Activated naive CD4-positive, alpha-beta T cell treated with anti-CD3 and anti-CD28 coated beads for 36 hours (primary cell): ENCODE measurements at regions of chr17 and their contacts with region 1.

Region 1: GRCh38 chr17:79997011-79997660 is 38.5 kb downstream of the TBC1D16 start:
- DNase-seq: peak; percentile 92
- H3K4me3 Mint-ChIP-seq: peak overlapping the region; percentile 68
- H3K27ac Mint-ChIP-seq: peak overlapping the region; percentile 97
- H3K4me1 Mint-ChIP-seq: peaks cover 59% of the 10 kb centered on the region
- H3K27me3 Mint-ChIP-seq: no peaks in the 10 kb centered on the region

Region 2: DNA sequence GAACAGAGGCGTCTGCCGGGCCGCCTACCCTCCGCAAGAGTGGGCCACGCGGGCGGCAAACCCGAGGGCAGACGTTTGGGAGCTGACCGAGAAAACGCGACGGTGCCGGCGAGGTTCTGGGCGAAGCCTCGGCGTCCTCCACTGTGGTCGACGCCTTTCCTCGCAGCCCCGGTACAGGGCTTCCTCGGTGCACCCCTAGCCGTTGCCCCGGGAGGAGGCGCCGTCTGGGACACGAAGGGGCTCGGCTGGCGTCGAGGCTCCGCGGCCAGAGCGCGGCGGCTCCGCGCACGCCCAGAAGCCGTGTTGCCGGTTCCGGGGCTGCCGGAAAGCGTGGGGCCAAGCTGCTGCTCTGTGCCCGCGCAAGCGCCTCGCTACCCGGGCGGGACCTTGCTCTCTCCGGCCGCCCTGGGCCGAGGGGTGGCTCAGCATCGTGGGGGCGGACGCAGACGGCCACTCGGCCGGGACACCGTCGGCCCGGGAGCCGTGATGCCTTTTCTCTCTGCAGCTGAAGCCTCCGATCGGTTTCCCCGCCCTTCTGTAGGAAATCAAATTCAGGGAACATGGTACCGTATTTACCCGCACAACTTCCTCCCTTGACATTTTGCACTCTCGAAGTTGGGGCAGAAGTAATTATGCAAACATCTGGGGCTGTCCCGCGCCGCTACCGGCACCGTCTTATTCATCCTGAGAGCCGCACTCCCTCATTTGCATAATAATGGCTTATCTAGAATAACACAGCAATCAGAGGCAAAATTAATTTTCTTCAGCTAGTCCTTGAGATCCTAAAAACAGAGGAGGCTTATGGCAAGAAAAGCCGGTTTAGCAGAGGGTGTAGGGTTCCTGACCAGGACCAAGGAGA is 192.9 kb before region 1 on chr17:
- CTCF ChIA-PET with region 1: no interaction called
- intact Hi-C with region 1: loop called (anchors 1 kb)
- DNase-seq: peak; percentile 94
- H3K4me3 Mint-ChIP-seq: peak overlapping the region; percentile 67
- H3K27ac Mint-ChIP-seq: peak overlapping the region; percentile 74
- H3K4me1 Mint-ChIP-seq: peaks cover 44% of the 10 kb centered on the region
- H3K27me3 Mint-ChIP-seq: peaks cover 85% of the 10 kb centered on the region

Region 3: DNA sequence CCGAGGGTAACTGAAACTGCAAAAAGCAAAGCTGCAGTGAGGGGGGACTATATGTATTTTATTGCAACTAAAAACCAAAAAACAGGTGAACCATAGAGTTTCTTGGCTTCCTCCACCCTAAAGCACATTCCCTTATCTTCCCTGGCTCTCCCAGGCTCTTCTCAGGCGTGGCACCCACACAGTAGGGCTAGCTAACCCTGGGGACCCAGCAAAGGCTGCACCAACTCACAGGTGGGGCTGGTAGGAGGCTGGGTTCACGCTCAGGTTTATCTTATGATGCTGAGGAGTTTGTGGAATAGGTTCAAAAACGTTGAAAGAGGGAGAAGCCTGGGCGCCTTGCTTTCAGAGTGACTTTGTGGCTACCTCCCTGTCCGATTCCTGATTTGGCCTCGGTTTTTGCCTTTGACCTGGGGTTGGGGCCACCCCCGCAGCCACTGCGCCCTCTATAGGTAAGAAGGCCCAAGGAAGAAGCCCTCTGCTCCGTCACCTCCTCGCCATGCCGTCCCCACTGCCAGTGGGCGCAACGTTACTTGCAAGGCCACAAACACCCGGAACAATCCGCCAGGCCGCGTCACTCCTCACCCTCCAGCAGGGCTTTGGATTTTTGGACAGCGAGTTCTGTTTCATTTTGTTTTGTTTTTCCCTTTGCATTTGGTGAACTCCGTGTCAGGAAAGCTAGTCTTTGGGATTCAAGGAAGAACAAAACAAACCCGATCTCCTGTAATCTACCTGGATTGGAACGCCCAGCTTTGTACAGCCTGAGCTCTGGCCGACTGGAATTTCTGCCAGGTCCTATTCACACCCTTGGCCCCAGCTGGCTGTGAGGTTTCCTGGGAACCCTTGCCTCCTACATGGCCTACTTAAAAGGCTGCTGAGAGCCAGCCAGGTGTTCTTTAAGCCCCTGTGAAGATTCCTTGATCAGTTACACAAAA is 22.3 kb before region 1 on chr17:
- CTCF ChIA-PET with region 1: no interaction called
- intact Hi-C with region 1: no loop called
- DNase-seq: no peak
- H3K4me3 Mint-ChIP-seq: no peak overlapping the region
- H3K27ac Mint-ChIP-seq: no peak overlapping the region
- H3K4me1 Mint-ChIP-seq: no peaks in the 10 kb centered on the region
- H3K27me3 Mint-ChIP-seq: no peaks in the 10 kb centered on the region

Region 4: GRCh38 chr17:80008383-80008840 is 11.3 kb after region 1 on chr17:
- CTCF ChIA-PET with region 1: interaction called, 45 read pairs
- intact Hi-C with region 1: no loop called
- DNase-seq: peak; percentile 86
- H3K4me3 Mint-ChIP-seq: no peak overlapping the region
- H3K27ac Mint-ChIP-seq: no peak overlapping the region
- H3K4me1 Mint-ChIP-seq: peaks cover 6% of the 10 kb centered on the region
- H3K27me3 Mint-ChIP-seq: no peaks in the 10 kb centered on the region

Region 5: DNA sequence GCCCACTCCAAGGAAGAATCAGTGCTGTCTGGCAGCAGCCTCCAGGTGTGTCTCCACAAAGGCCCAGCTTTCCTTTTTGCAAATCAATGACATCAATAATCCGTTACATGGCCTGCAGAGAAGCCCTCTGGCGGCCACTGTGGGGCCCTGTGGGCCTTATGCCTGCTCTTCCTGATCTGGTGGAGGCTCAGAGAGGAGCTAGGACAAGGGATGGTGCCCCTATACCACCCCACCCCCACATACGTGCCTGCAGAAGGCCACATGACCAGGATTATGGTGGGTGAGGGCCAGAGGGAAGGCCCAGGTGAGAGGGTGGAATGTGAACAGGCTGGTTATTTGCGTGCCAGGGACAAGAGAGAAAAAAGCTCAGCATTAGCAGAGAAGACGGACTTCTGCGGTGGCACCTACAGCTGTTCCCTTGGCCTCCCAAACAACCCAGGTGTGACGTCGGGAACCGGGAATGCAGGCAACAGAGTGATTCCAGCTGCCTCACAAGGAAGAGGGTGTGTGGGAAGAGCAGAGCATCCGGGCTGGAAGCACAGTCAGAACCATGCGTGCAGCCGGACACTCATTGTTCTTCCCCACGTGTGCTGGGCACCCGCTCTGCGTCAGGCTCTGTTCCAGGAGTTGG is 127.3 kb after region 1 on chr17:
- CTCF ChIA-PET with region 1: no interaction called
- intact Hi-C with region 1: no loop called
- DNase-seq: no peak
- H3K4me3 Mint-ChIP-seq: no peak overlapping the region
- H3K27ac Mint-ChIP-seq: no peak overlapping the region
- H3K4me1 Mint-ChIP-seq: no peaks in the 10 kb centered on the region
- H3K27me3 Mint-ChIP-seq: peaks cover 5% of the 10 kb centered on the region